CD14-positive monocyte (primary cell): ENCODE measurements at regions of chr14 and their contacts with region 1.

Region 1: DNA sequence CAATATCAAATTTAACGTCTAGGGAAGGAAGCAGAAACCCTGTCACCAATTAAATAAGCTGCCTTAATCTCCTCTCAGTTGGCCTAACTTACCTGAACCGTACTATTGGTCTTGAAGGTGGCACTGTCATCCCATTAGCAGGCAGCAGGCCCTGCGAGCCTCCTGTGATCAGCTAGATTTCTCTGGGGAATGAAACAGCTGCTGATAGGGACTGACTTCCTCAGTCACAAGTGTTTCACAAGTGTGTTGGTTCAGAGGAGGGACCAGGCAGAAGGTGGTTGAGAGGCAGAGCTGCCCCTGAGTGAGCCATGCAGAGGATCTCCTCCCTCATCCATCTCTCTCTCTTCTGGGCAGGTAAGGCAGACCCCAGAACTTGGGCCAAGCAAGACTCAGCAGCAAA is 166.8 kb downstream of the DAD1 start:
- DNase-seq: peak; percentile 15 to 16 (median 16)
- H3K4me3 ChIP-seq: no peak overlapping the region
- H3K4me3 Mint-ChIP-seq: no peak overlapping the region
- H3K27ac ChIP-seq: peak overlapping the region in 1 of 2 donors; percentile 63
- H3K27ac Mint-ChIP-seq: peak overlapping the region in 6 of 7 donors; percentile 14 to 65 (median 54)
- H3K4me1 ChIP-seq: peaks cover 31 to 39% of the 10 kb centered on the region in 2 donors
- H3K4me1 Mint-ChIP-seq: peaks cover 58% of the 10 kb centered on the region
- H3K27me3 ChIP-seq: no peaks in the 10 kb centered on the region
- H3K27me3 Mint-ChIP-seq: peaks cover 0 to 1% (median 1%) of the 10 kb centered on the region in 3 donors
- CTCF ChIP-seq: no peak

Region 2: GRCh38 chr14:22386924-22387775 is 35.1 kb before region 1 on chr14:
- intact Hi-C with region 1: no loop called
- DNase-seq: peak; percentile 48 to 63 (median 58)
- H3K4me3 ChIP-seq: no peak overlapping the region
- H3K4me3 Mint-ChIP-seq: no peak overlapping the region
- H3K27ac ChIP-seq: no peak overlapping the region
- H3K27ac Mint-ChIP-seq: peak overlapping the region in 1 of 7 donors; percentile 52
- H3K4me1 ChIP-seq: peaks cover 3 to 4% of the 10 kb centered on the region in 2 donors
- H3K4me1 Mint-ChIP-seq: peaks cover 5% of the 10 kb centered on the region
- H3K27me3 ChIP-seq: no peaks in the 10 kb centered on the region
- H3K27me3 Mint-ChIP-seq: peaks cover 0 to 2% (median 1%) of the 10 kb centered on the region in 3 donors
- CTCF ChIP-seq: peak; percentile 85

Region 3: DNA sequence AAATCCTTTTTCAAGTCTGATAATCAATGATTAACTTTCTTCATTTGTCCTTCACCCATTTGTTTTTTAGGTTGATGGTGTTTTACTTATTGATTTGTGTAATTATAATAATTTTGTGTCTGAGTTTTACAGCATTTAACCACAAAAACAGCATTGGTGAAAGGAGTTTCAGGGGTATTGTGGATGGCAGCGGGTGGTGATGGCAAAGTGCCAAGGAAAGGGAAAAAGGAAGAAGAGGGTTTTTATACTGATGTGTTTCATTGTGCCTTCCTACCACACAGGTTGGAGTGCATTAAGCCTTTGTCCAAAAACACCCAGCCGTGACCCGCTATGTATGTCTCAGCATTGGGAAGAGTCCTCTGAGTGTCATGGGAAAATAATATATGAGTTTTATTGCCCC is 16.5 kb after region 1 on chr14:
- intact Hi-C with region 1: loop called in 1 of 2 experiments (anchors 2 kb)
- DNase-seq: no peak
- H3K4me3 ChIP-seq: no peak overlapping the region
- H3K4me3 Mint-ChIP-seq: no peak overlapping the region
- H3K27ac ChIP-seq: no peak overlapping the region
- H3K27ac Mint-ChIP-seq: no peak overlapping the region
- H3K4me1 ChIP-seq: no peaks in the 10 kb centered on the region
- H3K4me1 Mint-ChIP-seq: peaks cover 5% of the 10 kb centered on the region
- H3K27me3 ChIP-seq: no peaks in the 10 kb centered on the region
- H3K27me3 Mint-ChIP-seq: peaks cover 2 to 3% (median 3%) of the 10 kb centered on the region in 3 donors
- CTCF ChIP-seq: no peak

Region 4: DNA sequence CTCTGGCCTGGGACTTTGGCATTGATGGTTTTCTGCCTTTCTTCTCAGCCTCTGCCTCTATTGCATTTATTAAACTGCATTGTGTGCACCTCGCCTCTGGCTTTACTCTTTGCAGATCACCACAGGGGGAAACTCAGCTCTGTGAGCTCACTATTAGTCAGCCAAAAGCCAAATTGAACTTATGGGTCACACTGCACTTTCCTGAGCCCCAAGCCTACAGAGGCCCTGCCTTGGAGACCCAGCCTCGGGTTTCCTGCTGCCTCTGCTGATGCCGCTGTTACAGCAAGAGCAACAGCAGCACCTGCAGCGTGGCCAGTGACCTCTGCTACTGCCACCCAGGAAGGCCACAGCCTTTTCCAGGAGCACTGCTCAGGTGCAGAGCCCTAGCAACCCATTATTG is 44.3 kb after region 1 on chr14:
- intact Hi-C with region 1: no loop called
- DNase-seq: no peak
- H3K4me3 ChIP-seq: no peak overlapping the region
- H3K4me3 Mint-ChIP-seq: no peak overlapping the region
- H3K27ac ChIP-seq: no peak overlapping the region
- H3K27ac Mint-ChIP-seq: no peak overlapping the region
- H3K4me1 ChIP-seq: no peaks in the 10 kb centered on the region
- H3K4me1 Mint-ChIP-seq: peaks cover 8% of the 10 kb centered on the region
- H3K27me3 ChIP-seq: no peaks in the 10 kb centered on the region
- H3K27me3 Mint-ChIP-seq: peaks cover 0 to 2% (median 0%) of the 10 kb centered on the region in 3 donors
- CTCF ChIP-seq: no peak